Esophagus muscularis mucosa (tissue), 4 donors: ENCODE measurements at regions of chr5 and their contacts with region 1.

Region 1: GRCh38 chr5:44691812-44692211 is 116.9 kb upstream of the MRPS30 start:
- DNase-seq: no peak
- H3K4me3 ChIP-seq: no peak overlapping the region
- H3K27ac ChIP-seq: no peak overlapping the region
- H3K4me1 ChIP-seq: no peaks in the 10 kb centered on the region
- H3K27me3 ChIP-seq: no peaks in the 10 kb centered on the region
- CTCF ChIP-seq: no peak
- EP300 ChIP-seq: no peak
- POLR2A ChIP-seq: no peak

Region 2: DNA sequence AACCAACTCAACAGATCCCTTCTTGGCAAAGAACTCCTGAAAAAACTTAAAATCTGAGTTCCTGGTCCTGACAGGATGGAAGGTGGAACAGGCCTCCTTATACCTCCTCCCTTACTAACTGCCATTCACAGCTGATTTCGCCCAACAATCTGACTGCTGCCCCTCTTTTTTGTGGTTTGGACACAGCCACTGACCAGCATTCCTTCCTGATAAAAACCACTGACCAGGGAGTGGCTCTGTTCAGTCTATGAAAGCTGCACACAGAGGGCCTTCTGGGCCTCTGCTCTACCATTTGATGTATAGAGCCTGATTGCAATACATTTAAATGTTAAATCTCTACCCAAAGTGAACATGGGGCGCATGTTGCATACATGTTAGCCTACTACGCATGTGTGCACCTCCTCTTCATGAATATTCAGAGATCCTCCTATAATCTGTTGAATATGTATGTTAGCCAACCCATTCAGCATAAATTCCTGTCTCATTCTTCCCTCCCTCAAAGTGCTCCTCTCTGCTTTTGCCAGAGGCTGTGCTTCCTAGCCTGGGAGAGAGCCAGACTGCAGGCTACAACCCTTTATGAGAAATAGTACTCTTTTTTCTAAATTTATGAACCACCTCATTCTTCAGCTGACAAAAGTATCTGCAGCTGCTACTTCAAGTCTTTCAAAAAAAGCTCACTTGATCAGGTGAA is 23.2 kb after region 1 on chr5:
- intact Hi-C with region 1: loop called (anchors 1 kb)
- DNase-seq: no peak
- H3K4me3 ChIP-seq: no peak overlapping the region
- H3K27ac ChIP-seq: no peak overlapping the region
- H3K4me1 ChIP-seq: no peaks in the 10 kb centered on the region
- H3K27me3 ChIP-seq: no peaks in the 10 kb centered on the region
- CTCF ChIP-seq: no peak
- EP300 ChIP-seq: no peak
- POLR2A ChIP-seq: no peak

Region 3: GRCh38 chr5:45089870-45090269 is 398.1 kb after region 1 on chr5:
- intact Hi-C with region 1: no loop called
- DNase-seq: no peak
- H3K4me3 ChIP-seq: no peak overlapping the region
- H3K27ac ChIP-seq: no peak overlapping the region
- H3K4me1 ChIP-seq: no peaks in the 10 kb centered on the region
- H3K27me3 ChIP-seq: no peaks in the 10 kb centered on the region
- CTCF ChIP-seq: no peak
- EP300 ChIP-seq: no peak
- POLR2A ChIP-seq: no peak